ENCODE measurements at regions of chr6 and their contacts with region 1.

Region 1: GRCh38 chr6:21826023-21826422 is 232.5 kb downstream of the SOX4 start:
- DNase-seq: peak; percentile 59 to 65
- H3K4me3 ChIP-seq: no peak overlapping the region
- H3K4me3 Mint-ChIP-seq: peak overlapping the region; percentile 72
- H3K27ac Mint-ChIP-seq: peak overlapping the region; percentile 76
- H3K4me1 ChIP-seq: peaks cover 54% of the 10 kb centered on the region
- H3K4me1 Mint-ChIP-seq: peaks cover 40% of the 10 kb centered on the region
- H3K27me3 ChIP-seq: no peaks in the 10 kb centered on the region
- H3K27me3 Mint-ChIP-seq: no peaks in the 10 kb centered on the region
- CTCF ChIP-seq: no peak

Region 2: GRCh38 chr6:21842875-21843645 is 17.0 kb after region 1 on chr6:
- CTCF ChIA-PET with region 1: no interaction called
- POLR2A ChIA-PET with region 1: interaction called, 4 read pairs
- intact Hi-C with region 1: loop called (anchors 2 kb)
- DNase-seq: no peak
- H3K4me3 ChIP-seq: no peak overlapping the region
- H3K4me3 Mint-ChIP-seq: no peak overlapping the region
- H3K27ac Mint-ChIP-seq: no peak overlapping the region
- H3K4me1 ChIP-seq: peaks cover 23% of the 10 kb centered on the region
- H3K4me1 Mint-ChIP-seq: peaks cover 20% of the 10 kb centered on the region
- H3K27me3 ChIP-seq: no peaks in the 10 kb centered on the region
- H3K27me3 Mint-ChIP-seq: no peaks in the 10 kb centered on the region
- CTCF ChIP-seq: no peak